ENCODE measurements at regions of chr14 and their contacts with region 1.

Region 1: DNA sequence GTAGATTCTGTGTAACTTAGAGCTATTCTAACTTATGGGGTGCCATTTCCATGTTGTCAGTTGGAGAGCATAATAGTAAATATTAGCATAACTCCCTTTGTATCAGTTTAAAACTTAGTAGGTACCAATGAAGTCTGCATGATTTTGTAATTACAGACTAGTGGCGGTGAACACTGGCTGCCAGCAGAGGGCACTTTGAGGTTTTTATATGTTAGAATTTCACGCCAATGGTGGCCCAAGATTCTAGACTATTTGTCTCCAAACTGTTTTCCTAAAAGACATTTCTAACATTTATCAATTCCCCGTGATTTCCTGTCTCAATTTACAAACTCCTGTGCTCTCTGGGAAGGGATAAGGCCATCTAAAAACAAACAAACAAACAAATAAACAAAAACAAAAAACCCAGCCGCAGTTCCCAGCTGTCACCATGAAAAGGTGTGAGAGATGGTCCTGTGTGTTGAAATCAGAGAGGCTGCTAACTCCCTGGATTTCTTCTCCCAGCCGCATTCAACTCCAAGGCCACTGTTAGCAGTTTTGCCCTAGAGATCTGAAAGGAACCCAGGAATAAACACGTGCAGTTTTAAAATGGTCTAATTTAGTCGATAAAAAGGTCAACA is 57.6 kb downstream of the BRMS1L start:
- DNase-seq: peak in 3 of 5 donors; percentile 6 to 13 (median 6)
- H3K4me3 ChIP-seq: no peak overlapping the region
- H3K4me3 Mint-ChIP-seq: no peak overlapping the region
- H3K27ac ChIP-seq: no peak overlapping the region
- H3K27ac Mint-ChIP-seq: no peak overlapping the region
- H3K4me1 ChIP-seq: no peaks in the 10 kb centered on the region
- H3K4me1 Mint-ChIP-seq: no peaks in the 10 kb centered on the region
- H3K27me3 ChIP-seq: no peaks in the 10 kb centered on the region
- H3K27me3 Mint-ChIP-seq: peaks cover 0 to 4% of the 10 kb centered on the region in 2 donors

Region 2: GRCh38 chr14:35911097-35911496 is 27.3 kb after region 1 on chr14:
- CTCF ChIA-PET with region 1: no interaction called
- POLR2A ChIA-PET with region 1: no interaction called
- intact Hi-C with region 1: no loop called
- DNase-seq: no peak
- H3K4me3 ChIP-seq: no peak overlapping the region
- H3K4me3 Mint-ChIP-seq: no peak overlapping the region
- H3K27ac ChIP-seq: no peak overlapping the region
- H3K27ac Mint-ChIP-seq: no peak overlapping the region
- H3K4me1 ChIP-seq: no peaks in the 10 kb centered on the region
- H3K4me1 Mint-ChIP-seq: no peaks in the 10 kb centered on the region
- H3K27me3 ChIP-seq: no peaks in the 10 kb centered on the region
- H3K27me3 Mint-ChIP-seq: peaks cover 0 to 7% of the 10 kb centered on the region in 2 donors

Region 3: DNA sequence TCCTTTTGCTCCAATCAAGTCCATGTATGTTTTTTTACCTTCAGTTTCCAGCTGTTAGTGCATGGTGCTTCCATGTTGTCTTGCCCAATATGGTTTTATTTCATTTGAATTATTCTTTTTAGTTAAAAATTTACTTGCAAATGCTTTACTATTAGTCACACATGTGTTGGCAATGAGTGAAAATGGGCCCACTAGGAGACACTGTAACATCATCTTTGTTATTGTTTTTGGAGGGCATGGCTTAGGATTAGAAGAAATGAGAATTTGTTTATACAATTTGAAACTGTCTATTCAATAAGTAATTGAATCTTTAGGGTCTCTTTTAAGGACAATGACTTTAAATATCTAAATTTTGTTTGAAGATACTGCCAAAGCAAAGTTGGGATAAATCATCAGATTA is 76.0 kb after region 1 on chr14:
- CTCF ChIA-PET with region 1: no interaction called
- POLR2A ChIA-PET with region 1: no interaction called
- intact Hi-C with region 1: no loop called
- DNase-seq: no peak
- H3K4me3 ChIP-seq: no peak overlapping the region
- H3K4me3 Mint-ChIP-seq: no peak overlapping the region
- H3K27ac ChIP-seq: no peak overlapping the region
- H3K27ac Mint-ChIP-seq: no peak overlapping the region
- H3K4me1 ChIP-seq: no peaks in the 10 kb centered on the region
- H3K4me1 Mint-ChIP-seq: no peaks in the 10 kb centered on the region
- H3K27me3 ChIP-seq: no peaks in the 10 kb centered on the region
- H3K27me3 Mint-ChIP-seq: peaks cover 2 to 3% of the 10 kb centered on the region in 2 donors

Region 4: GRCh38 chr14:36070031-36070719 is 186.4 kb after region 1 on chr14:
- CTCF ChIA-PET with region 1: interaction called, 22 read pairs
- POLR2A ChIA-PET with region 1: no interaction called
- intact Hi-C with region 1: loop called (anchors 1 kb)
- DNase-seq: no peak
- H3K4me3 ChIP-seq: no peak overlapping the region
- H3K4me3 Mint-ChIP-seq: no peak overlapping the region
- H3K27ac ChIP-seq: no peak overlapping the region
- H3K27ac Mint-ChIP-seq: no peak overlapping the region
- H3K4me1 ChIP-seq: no peaks in the 10 kb centered on the region
- H3K4me1 Mint-ChIP-seq: no peaks in the 10 kb centered on the region
- H3K27me3 ChIP-seq: no peaks in the 10 kb centered on the region
- H3K27me3 Mint-ChIP-seq: peaks cover 7 to 12% of the 10 kb centered on the region in 2 donors

Region 5: GRCh38 chr14:36129181-36129580 is 245.4 kb after region 1 on chr14:
- CTCF ChIA-PET with region 1: no interaction called
- POLR2A ChIA-PET with region 1: no interaction called
- intact Hi-C with region 1: no loop called
- DNase-seq: no peak
- H3K4me3 ChIP-seq: no peak overlapping the region
- H3K4me3 Mint-ChIP-seq: no peak overlapping the region
- H3K27ac ChIP-seq: no peak overlapping the region
- H3K27ac Mint-ChIP-seq: no peak overlapping the region
- H3K4me1 ChIP-seq: no peaks in the 10 kb centered on the region
- H3K4me1 Mint-ChIP-seq: no peaks in the 10 kb centered on the region
- H3K27me3 ChIP-seq: no peaks in the 10 kb centered on the region
- H3K27me3 Mint-ChIP-seq: peaks cover 3 to 9% of the 10 kb centered on the region in 2 donors

Region 6: GRCh38 chr14:36315159-36315853 is 431.5 kb after region 1 on chr14:
- CTCF ChIA-PET with region 1: no interaction called
- POLR2A ChIA-PET with region 1: no interaction called
- intact Hi-C with region 1: no loop called
- DNase-seq: no peak
- H3K4me3 ChIP-seq: no peak overlapping the region
- H3K4me3 Mint-ChIP-seq: no peak overlapping the region
- H3K27ac ChIP-seq: no peak overlapping the region
- H3K27ac Mint-ChIP-seq: no peak overlapping the region
- H3K4me1 ChIP-seq: peaks cover 18% of the 10 kb centered on the region
- H3K4me1 Mint-ChIP-seq: peaks cover 14 to 39% (median 23%) of the 10 kb centered on the region in 4 donors
- H3K27me3 ChIP-seq: no peaks in the 10 kb centered on the region
- H3K27me3 Mint-ChIP-seq: no peaks in the 10 kb centered on the region

Region 7: DNA sequence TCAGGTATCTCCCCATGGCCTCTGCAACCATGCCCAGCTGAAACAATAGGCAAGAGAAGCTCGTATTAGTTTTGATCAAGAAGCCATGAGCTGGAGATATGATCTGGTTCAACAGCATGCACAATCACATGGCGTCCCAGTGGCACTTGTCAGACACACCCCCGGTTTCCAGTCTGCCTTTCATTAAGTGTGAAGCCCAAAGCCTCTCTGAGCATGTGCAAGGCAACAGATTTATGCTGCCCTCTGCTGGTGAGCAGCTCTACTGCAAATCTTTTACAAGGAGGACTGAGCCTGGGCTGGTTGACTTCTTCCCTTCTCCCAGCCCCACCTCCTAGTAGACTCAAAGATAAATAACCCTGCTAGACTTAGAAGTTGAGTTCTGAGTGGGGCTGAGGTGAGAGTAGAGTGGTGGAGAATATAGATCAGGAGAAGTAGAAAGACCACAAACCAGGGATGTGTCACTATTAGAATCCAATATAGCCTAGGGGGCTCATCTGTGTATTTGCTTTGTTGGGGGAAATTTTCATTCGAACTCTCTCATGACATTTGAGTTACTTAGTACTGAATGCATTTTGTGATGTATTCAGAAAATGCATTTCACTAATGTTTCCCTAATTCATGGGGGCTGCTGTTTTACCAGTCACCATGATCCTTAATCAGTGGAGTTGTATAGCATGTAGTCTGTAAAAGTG is 490.3 kb after region 1 on chr14:
- CTCF ChIA-PET with region 1: interaction called, 18 read pairs
- POLR2A ChIA-PET with region 1: no interaction called
- intact Hi-C with region 1: loop called (anchors 1 kb)
- DNase-seq: peak; percentile 44 to 66 (median 56)
- H3K4me3 ChIP-seq: no peak overlapping the region
- H3K4me3 Mint-ChIP-seq: no peak overlapping the region
- H3K27ac ChIP-seq: no peak overlapping the region
- H3K27ac Mint-ChIP-seq: no peak overlapping the region
- H3K4me1 ChIP-seq: no peaks in the 10 kb centered on the region
- H3K4me1 Mint-ChIP-seq: peaks cover 0 to 3% (median under 1%) of the 10 kb centered on the region in 4 donors
- H3K27me3 ChIP-seq: no peaks in the 10 kb centered on the region
- H3K27me3 Mint-ChIP-seq: peaks cover 0 to 2% of the 10 kb centered on the region in 2 donors

Region 8: GRCh38 chr14:36604757-36605505 is 721.1 kb after region 1 on chr14:
- CTCF ChIA-PET with region 1: interaction called, 5 read pairs
- POLR2A ChIA-PET with region 1: no interaction called
- intact Hi-C with region 1: loop called (anchors 2 kb)
- DNase-seq: peak in 3 of 5 donors; percentile 5 to 18 (median 15)
- H3K4me3 ChIP-seq: no peak overlapping the region
- H3K4me3 Mint-ChIP-seq: no peak overlapping the region
- H3K27ac ChIP-seq: no peak overlapping the region
- H3K27ac Mint-ChIP-seq: no peak overlapping the region
- H3K4me1 ChIP-seq: no peaks in the 10 kb centered on the region
- H3K4me1 Mint-ChIP-seq: no peaks in the 10 kb centered on the region
- H3K27me3 ChIP-seq: no peaks in the 10 kb centered on the region
- H3K27me3 Mint-ChIP-seq: peaks cover 8 to 15% of the 10 kb centered on the region in 2 donors